ENCODE measurements at regions of chr3 and their contacts with region 1.

Region 1: GRCh38 chr3:46078712-46079400 is 51.6 kb upstream of the XCR1 start:
- DNase-seq: peak; percentile 88 to 96
- H3K4me3 ChIP-seq: no peak overlapping the region
- H3K27ac ChIP-seq: no peak overlapping the region
- H3K4me1 ChIP-seq: no peaks in the 10 kb centered on the region
- H3K27me3 ChIP-seq: no peaks in the 10 kb centered on the region
- CTCF ChIP-seq: peak; percentile 96 to 100 (median 99)
- POLR2A ChIP-seq: no peak

Region 2: GRCh38 chr3:45746777-45747622 is 331.9 kb before region 1 on chr3:
- intact Hi-C with region 1: no loop called
- DNase-seq: no peak
- H3K4me3 ChIP-seq: no peak overlapping the region
- H3K27ac ChIP-seq: no peak overlapping the region
- H3K4me1 ChIP-seq: no peaks in the 10 kb centered on the region
- H3K27me3 ChIP-seq: no peaks in the 10 kb centered on the region
- CTCF ChIP-seq: no peak
- POLR2A ChIP-seq: no peak

Region 3: DNA sequence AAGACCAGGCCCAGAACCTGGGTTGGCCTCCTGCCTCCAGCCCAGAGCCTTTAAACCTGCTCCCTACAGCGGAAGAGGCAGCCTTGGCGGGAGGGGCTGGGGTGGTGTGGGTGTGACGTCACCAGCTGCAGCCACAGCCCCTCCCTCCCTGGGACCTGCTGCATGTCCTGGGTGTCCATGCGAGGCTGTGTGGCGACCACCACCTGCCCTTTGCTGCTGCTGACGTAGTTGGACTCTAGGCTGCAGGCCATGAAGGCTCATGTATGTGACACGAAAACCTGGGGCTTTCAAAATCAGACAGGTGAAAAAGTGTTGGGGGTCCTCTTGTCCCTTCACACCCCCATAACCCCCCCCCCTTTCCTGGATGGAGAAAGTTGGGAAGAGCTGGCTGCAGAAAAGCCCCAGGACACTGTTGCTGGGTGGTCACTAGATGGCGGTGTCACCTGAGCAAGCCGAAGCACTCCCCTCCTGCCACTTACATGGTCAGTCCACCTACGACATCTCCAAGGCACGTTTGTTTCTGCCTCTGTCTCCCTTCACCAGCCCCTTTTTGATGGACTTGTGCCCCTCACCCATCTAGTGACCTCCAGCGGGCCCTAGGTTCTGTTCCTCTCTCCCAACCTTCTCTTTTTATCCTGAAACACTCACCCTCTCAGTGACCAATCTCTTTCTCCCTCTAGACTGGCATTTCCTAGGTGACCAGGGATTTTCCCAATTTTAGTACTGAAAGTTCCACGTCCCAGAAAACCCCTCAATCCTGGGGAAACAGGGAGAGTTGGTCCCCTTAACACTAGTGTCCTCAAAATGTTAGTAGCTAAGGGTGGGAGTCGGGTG is 317.8 kb before region 1 on chr3:
- intact Hi-C with region 1: loop called (anchors 5 kb)
- DNase-seq: peak; percentile 58 to 59
- H3K4me3 ChIP-seq: no peak overlapping the region
- H3K27ac ChIP-seq: no peak overlapping the region
- H3K4me1 ChIP-seq: no peaks in the 10 kb centered on the region
- H3K27me3 ChIP-seq: no peaks in the 10 kb centered on the region
- CTCF ChIP-seq: peak; percentile 66 to 78 (median 76)
- POLR2A ChIP-seq: no peak

Region 4: GRCh38 chr3:45938864-45939263 is 140.0 kb before region 1 on chr3:
- intact Hi-C with region 1: loop called (anchors 5 kb)
- DNase-seq: peak; percentile 82 to 92
- H3K4me3 ChIP-seq: no peak overlapping the region
- H3K27ac ChIP-seq: peak overlapping the region in 1 of 2 donors; percentile 10
- H3K4me1 ChIP-seq: peaks cover 0 to 3% of the 10 kb centered on the region in 2 donors
- H3K27me3 ChIP-seq: no peaks in the 10 kb centered on the region
- CTCF ChIP-seq: peak; percentile 85 to 93 (median 91)
- POLR2A ChIP-seq: peak in 1 of 2 donors; percentile 17

Region 5: GRCh38 chr3:46208167-46208704 is 129.4 kb after region 1 on chr3 and contains the start of gene CCR1:
- intact Hi-C with region 1: no loop called
- DNase-seq: no peak
- H3K4me3 ChIP-seq: no peak within 1 kb of the TSS
- H3K27ac ChIP-seq: no peak within 1 kb of the TSS
- H3K4me1 ChIP-seq: no peaks in the 10 kb centered on the region
- H3K27me3 ChIP-seq: no peaks in the 10 kb centered on the region
- CTCF ChIP-seq: no peak
- POLR2A ChIP-seq: no peak
- total RNA-seq, gene CCR1: 0.77 to 9.1 (median 4.3) TPM